ENCODE measurements at regions of chr10 and their contacts with region 1.

Region 1: GRCh38 chr10:13371897-13372470 is 23.9 kb upstream of the SEPHS1 start:
- H3K4me3 ChIP-seq: no peak overlapping the region
- H3K27ac ChIP-seq: no peak overlapping the region
- H3K4me1 ChIP-seq: no peaks in the 10 kb centered on the region
- CTCF ChIP-seq: peak; percentile 68; the same call in 1 of the 2 replicates

Region 2: DNA sequence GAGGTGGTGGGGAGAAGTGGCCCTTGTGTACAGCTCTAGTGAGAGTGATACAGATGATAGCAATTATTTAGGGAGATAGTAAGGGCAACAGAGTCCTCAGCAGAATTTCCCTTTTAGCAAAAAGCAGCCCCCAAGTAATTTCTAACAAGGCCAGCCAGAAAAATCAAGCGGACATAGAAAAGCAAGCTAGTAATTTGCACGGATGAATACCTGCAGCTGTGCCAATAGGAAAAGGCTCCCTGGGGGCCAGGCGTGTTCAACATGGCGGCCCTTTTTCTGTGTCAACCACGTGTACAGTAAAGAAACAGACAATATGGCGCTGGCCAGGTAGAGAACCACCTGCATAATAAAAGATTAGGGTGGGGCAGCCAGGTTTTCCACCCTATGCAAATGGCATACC is 203.2 kb before region 1 on chr10:
- CTCF ChIA-PET with region 1: no interaction called
- POLR2A ChIA-PET with region 1: no interaction called
- H3K4me3 ChIP-seq: no peak overlapping the region
- H3K27ac ChIP-seq: no peak overlapping the region
- H3K4me1 ChIP-seq: no peaks in the 10 kb centered on the region
- CTCF ChIP-seq: no peak

Region 3: GRCh38 chr10:13206546-13207443 is 165.2 kb before region 1 on chr10:
- CTCF ChIA-PET with region 1: no interaction called
- POLR2A ChIA-PET with region 1: no interaction called
- H3K4me3 ChIP-seq: no peak overlapping the region
- H3K27ac ChIP-seq: no peak overlapping the region
- H3K4me1 ChIP-seq: no peaks in the 10 kb centered on the region
- CTCF ChIP-seq: no peak; the same call in 1 of the 2 replicates

Region 4: GRCh38 chr10:13352519-13352918 is 19.5 kb before region 1 on chr10:
- CTCF ChIA-PET with region 1: interaction called, 12 read pairs
- POLR2A ChIA-PET with region 1: interaction called, 3 read pairs
- H3K4me3 ChIP-seq: no peak overlapping the region
- H3K27ac ChIP-seq: no peak overlapping the region
- H3K4me1 ChIP-seq: no peaks in the 10 kb centered on the region; the same call in 1 of the 2 replicates
- CTCF ChIP-seq: no peak

Region 5: DNA sequence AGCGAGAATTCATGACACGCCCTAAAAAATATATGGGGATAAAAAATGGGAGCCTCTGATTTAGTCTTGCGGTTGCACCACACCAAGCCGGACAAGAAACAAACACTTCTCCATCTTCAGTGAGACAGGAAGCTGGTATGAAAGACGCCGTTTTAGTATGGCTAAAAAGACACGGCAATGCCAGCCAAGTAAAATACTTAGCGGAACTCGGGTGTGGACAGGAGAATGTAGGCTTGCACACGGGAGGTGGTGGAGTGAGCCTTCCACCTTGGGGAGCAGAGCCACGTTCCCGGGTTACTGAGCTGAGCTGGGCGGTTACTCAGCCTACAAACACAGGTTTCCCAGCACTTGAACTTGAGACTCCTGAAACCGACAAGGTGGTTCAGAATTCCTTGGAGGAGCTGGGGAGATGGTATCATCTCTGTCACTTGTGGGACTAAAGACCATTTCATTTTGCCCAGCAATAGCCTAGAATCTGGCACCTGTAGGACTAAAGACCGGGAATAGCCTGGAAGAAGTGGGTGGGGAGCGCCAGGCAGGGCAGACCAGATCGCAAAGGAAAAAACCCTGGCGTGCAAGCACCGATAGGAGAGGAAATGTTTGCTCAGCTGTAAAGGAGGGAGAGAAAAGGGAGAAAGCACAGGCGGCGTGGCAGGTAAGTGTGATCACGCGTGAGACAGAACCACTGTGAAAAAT is 10.9 kb after region 1 on chr10:
- CTCF ChIA-PET with region 1: interaction called, 18 read pairs
- POLR2A ChIA-PET with region 1: interaction called, 3 read pairs
- H3K4me3 ChIP-seq: peak overlapping the region; percentile 24
- H3K27ac ChIP-seq: no peak overlapping the region
- H3K4me1 ChIP-seq: peaks cover 4% of the 10 kb centered on the region; the same call in 1 of the 2 replicates
- CTCF ChIP-seq: no peak

Region 6: GRCh38 chr10:13536674-13537366 is 164.8 kb after region 1 on chr10:
- CTCF ChIA-PET with region 1: interaction called, 84 read pairs
- POLR2A ChIA-PET with region 1: interaction called, 5 read pairs
- H3K4me3 ChIP-seq: peak overlapping the region; percentile 2; the same call in 1 of the 2 replicates
- H3K27ac ChIP-seq: no peak overlapping the region
- H3K4me1 ChIP-seq: no peaks in the 10 kb centered on the region
- CTCF ChIP-seq: peak; percentile 59